ENCODE measurements at regions of chr6 and their contacts with region 1.

Region 1: GRCh38 chr6:36360241-36361054 is 23.8 kb upstream of the BNIP5 start:
- DNase-seq: peak; percentile 88
- ATAC-seq: peak; percentile 95

Region 2: DNA sequence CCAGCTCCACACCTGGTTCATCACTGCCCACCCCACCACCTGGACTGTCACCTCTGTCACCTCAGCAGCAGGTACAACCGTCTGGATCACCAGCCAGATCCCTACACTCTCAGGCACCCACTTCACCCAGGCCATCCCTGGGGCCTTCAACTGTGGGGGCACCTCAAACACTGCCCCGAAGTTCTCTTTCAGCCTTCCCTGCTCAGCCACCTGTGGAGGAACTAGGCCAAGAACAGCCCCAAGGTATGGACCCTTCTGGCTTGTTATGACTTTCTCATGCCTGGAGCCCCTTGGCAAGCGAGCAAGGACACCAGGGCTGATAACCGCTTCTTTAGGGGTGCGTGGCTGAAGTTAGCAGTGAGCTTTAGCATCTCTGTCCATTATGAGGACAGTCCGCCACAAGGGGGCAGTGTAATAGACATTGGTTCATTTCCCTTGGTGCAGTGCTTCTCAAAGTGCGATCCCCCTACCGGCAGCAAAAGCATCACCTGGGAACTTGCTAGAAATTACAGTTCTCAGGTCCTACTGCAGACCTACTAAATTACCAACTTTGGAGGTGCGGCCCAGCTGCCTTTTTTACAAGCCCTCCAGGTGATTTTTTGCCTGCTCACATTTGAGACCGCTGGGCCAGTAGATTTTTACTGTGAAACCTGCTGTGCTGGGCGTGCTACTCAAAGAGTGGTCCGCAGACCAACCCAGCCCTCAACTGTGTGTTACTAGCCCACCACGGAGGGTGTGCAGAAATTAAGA is 58.0 kb before region 1 on chr6:
- intact Hi-C with region 1: loop called (anchors 5 kb)
- DNase-seq: peak; percentile 81
- ATAC-seq: peak; percentile 96

Region 3: DNA sequence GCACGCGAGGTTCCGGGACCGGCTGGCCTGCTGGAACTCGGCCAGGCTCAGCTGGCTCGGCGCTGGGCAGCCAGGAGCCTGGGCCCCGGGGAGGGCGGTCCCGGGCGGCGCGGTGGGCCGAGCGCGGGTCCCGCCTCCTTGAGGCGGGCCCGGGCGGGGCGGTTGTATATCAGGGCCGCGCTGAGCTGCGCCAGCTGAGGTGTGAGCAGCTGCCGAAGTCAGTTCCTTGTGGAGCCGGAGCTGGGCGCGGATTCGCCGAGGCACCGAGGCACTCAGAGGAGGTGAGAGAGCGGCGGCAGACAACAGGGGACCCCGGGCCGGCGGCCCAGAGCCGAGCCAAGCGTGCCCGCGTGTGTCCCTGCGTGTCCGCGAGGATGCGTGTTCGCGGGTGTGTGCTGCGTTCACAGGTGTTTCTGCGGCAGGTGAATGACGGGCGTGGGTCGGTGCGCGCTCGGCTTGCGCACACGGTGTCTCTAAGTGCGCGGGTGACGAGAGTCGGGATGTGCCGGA is 318.1 kb after region 1 on chr6 and contains the start of gene CDKN1A:
- intact Hi-C with region 1: no loop called
- DNase-seq: peak; percentile 95
- ATAC-seq: peak; percentile 84
- total RNA-seq, gene CDKN1A: 54.5 TPM

Measured in Right ventricle myocardium superior (tissue), 1 donor.